ENCODE measurements at regions of chr11 and their contacts with region 1.

Region 1: GRCh38 chr11:121451986-121452608 is at the start of gene SORL1:
- DNase-seq: peak; percentile 67
- H3K4me3 ChIP-seq: peak within 1 kb of the TSS; percentile 59 to 79 (median 77)
- H3K27ac ChIP-seq: peak within 1 kb of the TSS; percentile 5
- H3K4me1 ChIP-seq: peaks cover 9% of the 10 kb centered on the region
- H3K27me3 ChIP-seq: no peaks in the 10 kb centered on the region
- CTCF ChIP-seq: peak; percentile 54 to 77
- total RNA-seq, gene SORL1: 17.5 to 84.3 TPM

Region 2: GRCh38 chr11:121179306-121179705 is 272.8 kb before region 1 on chr11:
- CTCF ChIA-PET with region 1: no interaction called
- dilution Hi-C with region 1: no loop called
- in situ Hi-C with region 1: no loop called
- intact Hi-C with region 1: no loop called
- DNase-seq: no peak
- H3K4me3 ChIP-seq: no peak overlapping the region
- H3K27ac ChIP-seq: no peak overlapping the region
- H3K4me1 ChIP-seq: no peaks in the 10 kb centered on the region
- H3K27me3 ChIP-seq: no peaks in the 10 kb centered on the region
- CTCF ChIP-seq: no peak

Region 3: GRCh38 chr11:121417055-121417551 is 35.0 kb before region 1 on chr11:
- CTCF ChIA-PET with region 1: no interaction called
- dilution Hi-C with region 1: no loop called
- in situ Hi-C with region 1: no loop called
- intact Hi-C with region 1: no loop called
- DNase-seq: peak; percentile 83
- H3K4me3 ChIP-seq: no peak overlapping the region
- H3K27ac ChIP-seq: no peak overlapping the region
- H3K4me1 ChIP-seq: peaks cover 13% of the 10 kb centered on the region
- H3K27me3 ChIP-seq: peaks cover 4% of the 10 kb centered on the region
- CTCF ChIP-seq: no peak

Region 4: GRCh38 chr11:121464352-121464946 is 12.4 kb after region 1 on chr11:
- CTCF ChIA-PET with region 1: no interaction called
- dilution Hi-C with region 1: no loop called
- in situ Hi-C with region 1: no loop called
- intact Hi-C with region 1: loop called (anchors 1 kb)
- DNase-seq: peak; percentile 92
- H3K4me3 ChIP-seq: no peak overlapping the region
- H3K27ac ChIP-seq: peak overlapping the region; percentile 87
- H3K4me1 ChIP-seq: peaks cover 50% of the 10 kb centered on the region
- H3K27me3 ChIP-seq: no peaks in the 10 kb centered on the region
- CTCF ChIP-seq: no peak

Region 5: GRCh38 chr11:121540627-121541026 is 88.5 kb after region 1 on chr11:
- CTCF ChIA-PET with region 1: no interaction called
- dilution Hi-C with region 1: no loop called
- in situ Hi-C with region 1: loop called in 1 of 2 experiments (anchors 10 kb)
- intact Hi-C with region 1: no loop called
- DNase-seq: peak; percentile 93
- H3K4me3 ChIP-seq: no peak overlapping the region
- H3K27ac ChIP-seq: peak overlapping the region; percentile 80
- H3K4me1 ChIP-seq: peaks cover 16% of the 10 kb centered on the region
- H3K27me3 ChIP-seq: no peaks in the 10 kb centered on the region
- CTCF ChIP-seq: no peak

Region 6: GRCh38 chr11:121591405-121592033 is 139.4 kb after region 1 on chr11:
- CTCF ChIA-PET with region 1: no interaction called
- dilution Hi-C with region 1: no loop called
- in situ Hi-C with region 1: loop called in 1 of 2 experiments (anchors 10 kb)
- intact Hi-C with region 1: loop called (anchors 1 kb)
- DNase-seq: peak; percentile 65
- H3K4me3 ChIP-seq: no peak overlapping the region
- H3K27ac ChIP-seq: no peak overlapping the region
- H3K4me1 ChIP-seq: peaks cover 16% of the 10 kb centered on the region
- H3K27me3 ChIP-seq: no peaks in the 10 kb centered on the region
- CTCF ChIP-seq: peak; percentile 82

Region 7: GRCh38 chr11:121711963-121712362 is 259.9 kb after region 1 on chr11:
- CTCF ChIA-PET with region 1: no interaction called
- dilution Hi-C with region 1: no loop called
- in situ Hi-C with region 1: no loop called
- intact Hi-C with region 1: no loop called
- DNase-seq: no peak
- H3K4me3 ChIP-seq: no peak overlapping the region
- H3K27ac ChIP-seq: no peak overlapping the region
- H3K4me1 ChIP-seq: no peaks in the 10 kb centered on the region
- H3K27me3 ChIP-seq: no peaks in the 10 kb centered on the region
- CTCF ChIP-seq: no peak

Measured in mammary epithelial cell (primary cell).